ENCODE measurements at regions of chr1 and their contacts with region 1.

Region 1: DNA sequence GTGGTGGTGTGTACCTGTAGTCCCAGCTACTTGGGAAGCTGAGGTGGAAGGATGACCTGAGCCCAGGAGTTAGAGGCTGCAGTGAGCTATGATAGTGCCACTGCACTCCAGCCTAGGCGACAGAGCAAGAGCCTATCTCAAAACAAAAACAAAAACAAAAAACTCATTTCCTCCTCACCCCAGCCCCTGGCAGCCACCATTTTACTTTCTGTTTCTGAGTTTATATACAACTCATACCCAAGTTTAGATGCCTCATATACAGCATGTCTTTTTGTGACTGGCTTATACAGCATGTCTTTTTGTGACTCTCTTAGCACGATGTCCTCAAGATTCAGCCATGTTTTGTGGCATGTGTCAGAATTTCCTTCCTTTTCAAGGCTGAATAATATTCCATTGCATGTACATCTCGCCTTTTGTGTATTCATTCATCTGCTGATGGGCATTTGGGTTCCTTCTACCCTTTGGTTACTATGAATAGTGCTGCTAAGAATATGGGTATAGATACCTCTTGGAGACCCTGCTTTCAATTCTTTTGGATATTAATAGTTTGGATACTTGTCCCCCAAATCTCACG is 14.7 kb downstream of the COA7 start:
- DNase-seq: no peak
- ATAC-seq: no peak
- H3K4me3 ChIP-seq: no peak overlapping the region
- H3K4me3 Mint-ChIP-seq: no peak overlapping the region
- H3K27ac ChIP-seq: no peak overlapping the region
- H3K27ac Mint-ChIP-seq: peak overlapping the region in 6 of 9 donors; percentile 8 to 68 (median 26)
- H3K4me1 ChIP-seq: peaks cover 4 to 6% of the 10 kb centered on the region in 2 donors
- H3K4me1 Mint-ChIP-seq: peaks cover 6 to 28% (median 13%) of the 10 kb centered on the region in 7 donors
- H3K27me3 ChIP-seq: no peaks in the 10 kb centered on the region
- H3K27me3 Mint-ChIP-seq: no peaks in the 10 kb centered on the region

Region 2: DNA sequence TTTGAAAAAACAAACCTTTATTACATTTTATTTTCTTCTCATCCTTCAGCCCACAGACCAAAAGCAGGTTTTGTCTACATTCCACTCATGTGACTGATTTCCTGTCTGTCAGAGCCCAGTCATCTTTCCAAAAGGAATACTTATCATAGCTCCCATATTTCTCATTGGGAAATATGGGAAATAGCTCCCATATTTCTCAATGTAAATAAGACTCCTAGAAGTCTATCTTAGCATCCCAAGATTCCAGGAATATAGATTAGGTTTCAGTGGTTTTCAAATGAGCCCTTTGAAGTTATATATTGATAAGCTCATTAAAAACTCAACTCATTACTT is 785.8 kb before region 1 on chr1:
- CTCF ChIA-PET with region 1: no interaction called
- POLR2A ChIA-PET with region 1: no interaction called
- intact Hi-C with region 1: loop called (anchors 2 to 10 kb)
- DNase-seq: no peak
- ATAC-seq: no peak
- H3K4me3 ChIP-seq: no peak overlapping the region
- H3K4me3 Mint-ChIP-seq: no peak overlapping the region
- H3K27ac ChIP-seq: no peak overlapping the region
- H3K27ac Mint-ChIP-seq: no peak overlapping the region
- H3K4me1 ChIP-seq: no peaks in the 10 kb centered on the region
- H3K4me1 Mint-ChIP-seq: peaks cover 0 to 4% (median 0%) of the 10 kb centered on the region in 7 donors
- H3K27me3 ChIP-seq: peaks cover 0 to 3% of the 10 kb centered on the region in 2 donors
- H3K27me3 Mint-ChIP-seq: peaks cover 24 to 55% (median 50%) of the 10 kb centered on the region in 5 donors

Region 3: DNA sequence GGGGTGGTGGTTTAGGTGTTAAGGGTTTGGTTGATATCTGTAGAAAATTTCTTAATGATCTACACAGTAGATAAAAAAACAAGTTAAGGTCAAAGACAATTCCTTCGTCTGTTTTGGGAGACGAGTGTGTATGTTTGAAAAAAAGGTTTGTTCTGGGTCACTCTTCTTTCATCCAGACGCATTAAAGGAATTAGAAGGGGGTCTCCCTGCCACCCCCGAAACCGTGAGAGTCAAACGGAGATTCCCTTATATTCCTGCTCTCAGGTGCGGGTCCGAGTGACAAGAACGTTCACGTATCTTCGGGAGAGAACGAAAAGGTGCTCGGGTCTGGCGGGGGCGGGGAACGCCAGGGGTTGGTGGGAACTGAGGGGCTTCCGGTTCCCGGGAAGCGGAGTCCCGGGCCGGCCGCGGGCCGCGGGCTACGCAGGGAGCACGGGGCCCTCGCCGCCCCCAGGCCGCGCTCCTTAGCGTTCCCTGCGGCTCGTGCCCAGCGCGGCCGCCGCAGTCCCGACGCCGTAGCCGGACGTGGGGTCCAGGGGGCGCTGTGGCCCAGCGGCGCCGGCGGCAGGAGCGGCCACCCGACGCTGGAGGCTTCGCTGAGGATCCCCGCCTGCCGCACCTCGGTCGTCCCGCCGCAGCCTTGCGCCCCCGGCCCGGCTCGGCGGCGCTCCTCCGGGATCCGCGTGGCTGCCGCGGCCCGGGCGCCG is 541.8 kb before region 1 on chr1 and contains the start of gene ZFYVE9:
- CTCF ChIA-PET with region 1: no interaction called
- POLR2A ChIA-PET with region 1: interaction called, 5 read pairs
- intact Hi-C with region 1: loop called (anchors 1 to 2 kb)
- DNase-seq: peak; percentile 52 to 80 (median 73)
- ATAC-seq: peak; percentile 93
- H3K4me3 ChIP-seq: peak within 1 kb of the TSS; percentile 65
- H3K4me3 Mint-ChIP-seq: peak within 1 kb of the TSS; percentile 79 to 96 (median 92)
- H3K27ac ChIP-seq: peak within 1 kb of the TSS; percentile 72
- H3K27ac Mint-ChIP-seq: peak within 1 kb of the TSS; percentile 64 to 95 (median 86)
- H3K4me1 ChIP-seq: peaks cover 11 to 24% of the 10 kb centered on the region in 2 donors
- H3K4me1 Mint-ChIP-seq: peaks cover 26 to 48% (median 43%) of the 10 kb centered on the region in 7 donors
- H3K27me3 ChIP-seq: no peaks in the 10 kb centered on the region
- H3K27me3 Mint-ChIP-seq: peaks cover 0 to 44% (median 0%) of the 10 kb centered on the region in 5 donors
- total RNA-seq, gene ZFYVE9: 1.8 to 13.9 (median 7.6) TPM

Region 4: DNA sequence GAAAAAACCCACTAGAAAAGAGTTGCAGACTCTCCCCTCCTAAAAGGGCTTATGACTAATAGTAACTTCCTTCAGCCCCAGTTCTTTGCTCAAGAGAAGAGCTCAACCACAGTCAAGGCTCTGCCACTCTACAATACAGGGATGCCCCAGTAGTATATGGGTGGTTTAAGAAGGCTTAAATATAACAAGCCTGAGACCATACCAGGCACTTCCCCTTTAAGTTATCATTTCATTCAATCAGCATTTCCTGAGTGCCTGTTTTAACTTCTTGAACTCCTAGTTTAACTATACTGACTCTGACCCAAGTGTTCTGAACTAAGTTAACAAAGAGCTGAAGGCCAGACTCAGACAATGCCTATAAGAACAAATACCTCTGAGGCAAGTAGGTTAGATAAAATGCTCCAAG is 259.2 kb before region 1 on chr1:
- CTCF ChIA-PET with region 1: interaction called, 4 read pairs
- POLR2A ChIA-PET with region 1: no interaction called
- intact Hi-C with region 1: loop called (anchors 1 kb)
- DNase-seq: peak in 7 of 9 donors; percentile 38 to 71 (median 57)
- ATAC-seq: peak; percentile 93
- H3K4me3 ChIP-seq: peak overlapping the region; percentile 14
- H3K4me3 Mint-ChIP-seq: peak overlapping the region; percentile 49 to 81 (median 74)
- H3K27ac ChIP-seq: peak overlapping the region; percentile 63
- H3K27ac Mint-ChIP-seq: peak overlapping the region; percentile 85 to 96 (median 91)
- H3K4me1 ChIP-seq: peaks cover 35 to 45% of the 10 kb centered on the region in 2 donors
- H3K4me1 Mint-ChIP-seq: peaks cover 33 to 72% (median 51%) of the 10 kb centered on the region in 7 donors
- H3K27me3 ChIP-seq: no peaks in the 10 kb centered on the region
- H3K27me3 Mint-ChIP-seq: no peaks in the 10 kb centered on the region

Region 5: GRCh38 chr1:52601991-52602855 is 81.2 kb before region 1 on chr1 and contains the start of gene GPX7:
- CTCF ChIA-PET with region 1: interaction called, 4 read pairs
- POLR2A ChIA-PET with region 1: interaction called, 5 read pairs
- intact Hi-C with region 1: loop called (anchors 1 kb)
- DNase-seq: peak; percentile 45 to 68 (median 62)
- ATAC-seq: peak; percentile 84
- H3K4me3 ChIP-seq: peak within 1 kb of the TSS; percentile 83
- H3K4me3 Mint-ChIP-seq: peak within 1 kb of the TSS; percentile 91 to 95 (median 92)
- H3K27ac ChIP-seq: peak within 1 kb of the TSS; percentile 82
- H3K27ac Mint-ChIP-seq: peak within 1 kb of the TSS; percentile 85 to 97 (median 95)
- H3K4me1 ChIP-seq: peaks cover 25 to 29% of the 10 kb centered on the region in 2 donors
- H3K4me1 Mint-ChIP-seq: peaks cover 38 to 57% (median 50%) of the 10 kb centered on the region in 7 donors
- H3K27me3 ChIP-seq: no peaks in the 10 kb centered on the region
- H3K27me3 Mint-ChIP-seq: no peaks in the 10 kb centered on the region
- total RNA-seq, gene GPX7: 14.8 to 32.8 (median 29.2) TPM

Region 6: DNA sequence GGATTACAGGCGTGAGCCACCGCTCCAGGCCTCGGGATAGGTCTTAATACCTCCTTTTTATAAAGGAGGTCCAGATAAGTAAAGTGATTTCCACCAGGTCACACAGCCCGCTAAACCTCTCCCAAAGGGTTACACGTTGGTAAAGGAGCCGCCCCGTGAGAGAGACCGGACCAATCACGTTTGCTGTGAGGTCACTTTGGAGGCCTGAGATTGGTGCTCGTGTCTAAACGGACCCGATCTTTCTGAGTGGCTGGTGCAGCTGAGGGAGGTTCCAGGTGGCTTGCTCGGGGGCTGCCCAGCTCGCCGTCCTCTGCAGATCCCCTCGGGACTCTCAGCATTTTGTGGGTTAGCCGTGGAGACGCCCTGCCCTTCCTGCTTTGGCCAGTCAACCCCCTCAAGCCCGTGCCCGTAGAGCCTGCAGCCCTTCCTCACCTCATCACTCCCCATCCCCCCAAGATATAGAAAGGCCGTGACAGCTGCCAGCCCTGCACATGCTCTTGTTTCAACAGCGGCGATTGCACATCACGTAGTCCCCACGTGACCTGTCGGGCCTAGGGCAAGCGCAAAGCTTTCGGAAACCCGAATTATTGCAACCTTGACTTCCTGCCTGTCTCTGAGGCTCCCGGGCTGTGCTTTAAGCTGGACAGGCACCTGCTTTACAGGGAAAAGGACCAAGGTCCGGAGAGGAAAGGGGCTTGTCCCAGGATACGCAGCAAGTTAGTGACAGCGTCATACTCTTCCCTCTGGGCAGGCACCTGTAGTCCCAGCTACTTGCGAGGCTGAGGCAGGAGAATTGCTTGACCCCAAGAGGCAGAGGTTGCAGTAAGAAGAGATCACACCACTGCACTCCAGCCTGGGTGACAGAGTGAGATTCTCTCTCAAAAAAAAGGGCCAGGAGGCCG is 19.7 kb after region 1 on chr1:
- CTCF ChIA-PET with region 1: interaction called, 4 read pairs
- POLR2A ChIA-PET with region 1: no interaction called
- intact Hi-C with region 1: loop called in 1 of 2 experiments (anchors 1 kb)
- DNase-seq: peak; percentile 62 to 89 (median 83)
- ATAC-seq: peak; percentile 95
- H3K4me3 ChIP-seq: peak overlapping the region; percentile 52
- H3K4me3 Mint-ChIP-seq: peak overlapping the region; percentile 75 to 96 (median 92)
- H3K27ac ChIP-seq: peak overlapping the region; percentile 83
- H3K27ac Mint-ChIP-seq: peak overlapping the region; percentile 97 to 99 (median 99)
- H3K4me1 ChIP-seq: peaks cover 6% of the 10 kb centered on the region in 2 donors
- H3K4me1 Mint-ChIP-seq: peaks cover 21 to 46% (median 32%) of the 10 kb centered on the region in 7 donors
- H3K27me3 ChIP-seq: no peaks in the 10 kb centered on the region
- H3K27me3 Mint-ChIP-seq: peaks cover 0 to 12% (median 0%) of the 10 kb centered on the region in 5 donors

Region 7: DNA sequence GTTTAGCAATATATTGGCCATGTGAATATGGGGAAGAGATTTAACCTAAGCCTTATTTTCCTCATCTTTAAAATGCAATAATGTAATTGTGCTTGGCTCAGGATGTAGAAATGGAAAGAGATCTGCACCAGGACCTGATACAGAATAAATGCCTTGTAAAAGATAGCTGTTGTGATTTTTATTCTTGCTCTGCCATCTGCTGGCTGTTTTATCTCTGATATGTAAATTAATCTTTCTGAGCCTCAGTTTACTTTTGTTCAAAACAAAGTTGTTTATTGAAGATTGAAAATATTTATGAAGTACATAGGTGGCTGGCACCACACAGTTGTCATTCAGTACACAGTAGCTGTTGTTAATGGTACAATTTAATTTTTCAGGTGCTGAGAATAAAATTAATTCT is 64.7 kb after region 1 on chr1:
- CTCF ChIA-PET with region 1: no interaction called
- POLR2A ChIA-PET with region 1: no interaction called
- intact Hi-C with region 1: no loop called
- DNase-seq: no peak
- ATAC-seq: no peak
- H3K4me3 ChIP-seq: no peak overlapping the region
- H3K4me3 Mint-ChIP-seq: no peak overlapping the region
- H3K27ac ChIP-seq: no peak overlapping the region
- H3K27ac Mint-ChIP-seq: no peak overlapping the region
- H3K4me1 ChIP-seq: peaks cover 0 to 3% of the 10 kb centered on the region in 2 donors
- H3K4me1 Mint-ChIP-seq: peaks cover 4 to 57% (median 38%) of the 10 kb centered on the region in 7 donors
- H3K27me3 ChIP-seq: no peaks in the 10 kb centered on the region
- H3K27me3 Mint-ChIP-seq: no peaks in the 10 kb centered on the region